ENCODE measurements at regions of chr6 and their contacts with region 1.

Region 1: DNA sequence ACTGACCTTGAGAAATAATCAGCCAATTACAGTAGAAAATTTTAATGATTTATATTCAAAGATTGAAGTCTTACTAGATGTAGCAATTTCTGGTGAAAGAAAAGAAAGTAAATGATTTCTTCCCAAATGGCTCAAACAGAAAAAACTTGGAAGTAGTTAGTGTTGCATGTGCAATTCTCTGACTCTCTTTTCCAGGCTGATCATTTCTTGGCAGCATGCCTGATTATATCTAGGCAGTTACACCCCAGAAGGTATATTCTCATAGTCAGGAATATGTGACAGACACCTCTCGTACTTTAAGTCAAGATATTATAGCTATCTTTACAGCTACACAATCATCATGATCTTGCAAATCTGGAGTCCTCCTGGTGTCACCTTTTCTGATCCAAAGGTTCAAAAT is 122.9 kb downstream of the PDE7B start:
- DNase-seq: no peak

Region 2: GRCh38 chr6:135379647-135380046 is 594.8 kb before region 1 on chr6:
- intact Hi-C with region 1: loop called in 1 of 2 experiments (anchors 5 kb)
- DNase-seq: no peak

Region 3: GRCh38 chr6:135600086-135600702 is 374.2 kb before region 1 on chr6:
- intact Hi-C with region 1: no loop called
- DNase-seq: no peak

Region 4: DNA sequence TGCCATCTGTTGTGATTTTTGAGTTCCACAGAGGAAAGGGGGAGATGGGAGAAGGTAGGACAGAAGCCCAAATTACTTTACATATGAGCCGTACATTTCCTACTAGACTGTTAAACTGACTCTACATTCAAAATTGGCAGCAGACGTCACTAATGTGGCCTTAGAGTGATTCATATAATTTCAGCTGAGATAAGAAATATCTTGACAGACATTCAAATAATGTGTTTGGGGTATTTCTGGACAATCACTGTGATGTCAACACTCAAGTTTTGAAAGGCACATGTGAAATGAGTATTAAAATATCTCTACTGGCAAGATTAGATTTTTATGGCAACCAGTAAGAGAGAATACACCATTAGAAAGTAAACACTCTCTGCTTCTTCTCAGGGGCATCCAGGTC is 171.7 kb after region 1 on chr6:
- intact Hi-C with region 1: no loop called
- DNase-seq: no peak

Measured in posterior vena cava (tissue), 2 donors.